ENCODE measurements at regions of chr15 and their contacts with region 1.

Region 1: GRCh38 chr15:45402162-45402954 is 24.0 kb upstream of the GATM start:
- DNase-seq: peak; percentile 98
- ATAC-seq: peak; percentile 99

Region 2: DNA sequence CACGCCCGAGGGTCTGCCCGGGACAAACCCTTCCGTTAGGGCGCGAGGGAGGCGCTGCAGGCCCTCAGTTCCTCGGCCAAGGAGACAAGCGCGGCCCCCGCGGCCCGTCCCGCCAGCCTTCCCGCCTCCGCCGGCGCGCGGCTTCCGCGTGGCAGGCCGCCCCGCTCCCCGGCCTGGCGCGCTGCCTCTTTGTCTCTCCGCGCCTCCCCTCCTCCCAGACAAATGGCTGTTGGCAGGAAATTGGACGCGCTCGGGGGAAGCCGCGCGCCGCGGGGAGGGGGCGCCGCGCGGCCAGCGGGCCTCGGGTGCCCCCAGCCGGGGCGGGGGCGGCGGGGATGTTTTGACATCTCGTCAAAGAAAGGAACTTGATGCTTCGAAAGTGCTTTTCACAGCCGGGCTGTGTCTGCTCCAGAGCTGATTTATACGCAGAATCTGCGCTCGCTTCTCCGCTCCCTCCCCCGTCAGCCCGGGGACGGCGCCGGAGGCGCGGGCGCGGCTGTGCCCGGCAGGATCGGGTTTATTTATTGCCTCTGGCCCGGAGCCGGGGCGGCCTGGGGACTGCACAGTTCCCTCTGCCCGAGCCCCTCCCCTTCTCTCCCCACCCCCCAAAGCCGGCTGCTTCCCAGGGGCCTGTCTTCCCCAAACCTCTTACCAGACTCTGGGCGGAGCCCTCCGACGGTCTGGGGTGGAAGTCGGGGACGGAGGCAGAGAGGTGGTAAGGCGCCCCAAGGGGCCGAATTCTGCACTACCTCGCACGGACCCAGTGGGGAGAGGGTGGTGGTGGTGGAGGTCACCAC is 235.3 kb before region 1 on chr15:
- intact Hi-C with region 1: loop called (anchors 10 kb)
- DNase-seq: peak; percentile 89
- ATAC-seq: peak; percentile 83

Region 3: GRCh38 chr15:45307230-45307924 is 95.0 kb before region 1 on chr15:
- intact Hi-C with region 1: loop called (anchors 5 kb)
- DNase-seq: no peak
- ATAC-seq: peak; percentile 74

Measured in sciatic nerve (tissue), 2 donors.